SK-N-SH (cell line): ENCODE measurements at regions of chr9 and their contacts with region 1.

Region 1: DNA sequence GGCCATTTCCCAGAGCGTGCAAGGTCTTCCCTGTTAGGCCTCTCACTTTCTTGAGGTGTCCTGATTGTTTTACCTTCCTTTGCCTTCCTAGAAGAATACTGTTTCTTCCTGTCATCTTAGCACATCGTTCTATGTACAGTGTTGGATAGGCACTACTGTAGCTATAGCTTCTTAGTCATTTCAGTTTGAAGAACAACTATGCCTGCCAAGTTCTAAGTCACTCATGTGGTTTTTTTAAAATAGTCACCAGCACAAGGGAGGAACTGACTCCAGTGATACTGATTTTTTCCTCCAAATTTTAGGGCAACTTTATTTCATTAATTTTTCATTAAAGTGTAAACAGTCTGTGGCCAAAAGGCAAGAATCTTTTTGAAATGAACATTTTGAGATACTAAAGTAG is 122.4 kb upstream of the NR5A1 start:
- DNase-seq: no peak
- H3K4me3 ChIP-seq: no peak overlapping the region
- H3K27ac ChIP-seq: peak overlapping the region; percentile 4 to 7; a peak in 2 of 4 replicates
- H3K4me1 ChIP-seq: peaks cover 13 to 20% of the 10 kb centered on the region in 2 experiments
- H3K27me3 ChIP-seq: no peaks in the 10 kb centered on the region
- CTCF ChIP-seq: no peak
- EP300 ChIP-seq: no peak
- RAD21 ChIP-seq: no peak

Region 2: GRCh38 chr9:124285903-124286291 is 343.7 kb before region 1 on chr9:
- CTCF ChIA-PET with region 1: no interaction called
- POLR2A ChIA-PET with region 1: no interaction called
- DNase-seq: no peak
- H3K4me3 ChIP-seq: no peak overlapping the region
- H3K27ac ChIP-seq: peak overlapping the region in 1 of 2 experiments; percentile 27; a peak in 1 of 4 replicates
- H3K4me1 ChIP-seq: 0 out of 4 replicates have a peak, but pooled peaks cover 0 to 6% of the 10 kb centered on the region in 2 experiments
- H3K27me3 ChIP-seq: no peaks in the 10 kb centered on the region
- CTCF ChIP-seq: no peak
- EP300 ChIP-seq: no peak
- RAD21 ChIP-seq: no peak

Region 3: DNA sequence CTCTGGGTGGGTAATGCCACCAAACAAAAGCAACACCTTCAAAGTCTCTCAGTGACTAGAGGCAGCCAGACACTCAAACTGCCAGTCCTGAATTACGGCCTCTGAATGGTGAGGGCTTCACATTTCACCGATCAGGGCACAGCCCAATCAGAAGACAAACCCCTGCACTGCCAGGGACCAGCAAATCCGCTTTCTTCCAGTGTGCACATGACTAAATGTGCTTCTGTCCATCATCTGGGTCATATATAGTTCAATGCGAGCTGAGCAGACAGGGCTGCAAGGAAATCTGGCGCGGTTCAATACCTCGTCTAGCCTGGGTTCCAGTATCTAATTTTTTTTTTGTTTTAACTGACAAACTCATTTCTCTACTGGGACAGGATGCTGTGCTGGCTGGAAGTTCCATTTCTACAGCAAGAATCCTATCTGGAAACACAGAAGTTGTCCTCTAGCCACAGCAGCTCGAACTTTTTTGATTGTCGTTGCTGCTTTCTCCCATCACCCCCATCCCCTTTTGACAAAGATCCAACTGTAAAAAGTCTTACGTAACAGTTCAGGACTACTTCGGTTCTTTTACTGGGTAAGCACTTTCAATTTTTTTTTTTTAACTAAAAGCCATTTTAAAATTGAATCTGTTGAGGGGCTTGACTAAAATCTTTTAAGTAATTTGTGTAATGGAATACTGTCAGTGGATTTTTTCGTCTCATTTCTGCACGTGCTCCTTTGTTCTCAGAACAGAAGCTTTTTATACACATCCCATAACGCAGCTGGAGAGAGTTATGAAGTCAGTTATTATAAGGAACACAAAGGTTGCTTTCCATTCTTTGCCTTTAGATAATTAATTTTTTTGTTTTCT is 28.8 kb after region 1 on chr9:
- CTCF ChIA-PET with region 1: interaction called, 7 read pairs
- POLR2A ChIA-PET with region 1: interaction called, 17 read pairs
- DNase-seq: peak; percentile 76
- H3K4me3 ChIP-seq: peak overlapping the region; percentile 83 to 85
- H3K27ac ChIP-seq: peak overlapping the region; percentile 97 to 100
- H3K4me1 ChIP-seq: peaks cover 30% of the 10 kb centered on the region in 2 experiments; a peak in 3 of 4 replicates
- H3K27me3 ChIP-seq: no peaks in the 10 kb centered on the region
- CTCF ChIP-seq: no peak
- EP300 ChIP-seq: no peak
- RAD21 ChIP-seq: no peak